Activated T-helper 1 cell treated with anti-CD3 and anti-CD28 coated beads, Interleukin-12 subunit alpha, Interleukin-12 subunit beta, Interleukin-2, Interleukin-4 antibody, amounts not matched to agents 30 ng/mL and 10 ng/mL and 1 ng/mL, durations not matched to agents 14 hours and 24 hours and 36 hours (primary cell): ENCODE measurements at regions of chr5 and their contacts with region 1.

Region 1: DNA sequence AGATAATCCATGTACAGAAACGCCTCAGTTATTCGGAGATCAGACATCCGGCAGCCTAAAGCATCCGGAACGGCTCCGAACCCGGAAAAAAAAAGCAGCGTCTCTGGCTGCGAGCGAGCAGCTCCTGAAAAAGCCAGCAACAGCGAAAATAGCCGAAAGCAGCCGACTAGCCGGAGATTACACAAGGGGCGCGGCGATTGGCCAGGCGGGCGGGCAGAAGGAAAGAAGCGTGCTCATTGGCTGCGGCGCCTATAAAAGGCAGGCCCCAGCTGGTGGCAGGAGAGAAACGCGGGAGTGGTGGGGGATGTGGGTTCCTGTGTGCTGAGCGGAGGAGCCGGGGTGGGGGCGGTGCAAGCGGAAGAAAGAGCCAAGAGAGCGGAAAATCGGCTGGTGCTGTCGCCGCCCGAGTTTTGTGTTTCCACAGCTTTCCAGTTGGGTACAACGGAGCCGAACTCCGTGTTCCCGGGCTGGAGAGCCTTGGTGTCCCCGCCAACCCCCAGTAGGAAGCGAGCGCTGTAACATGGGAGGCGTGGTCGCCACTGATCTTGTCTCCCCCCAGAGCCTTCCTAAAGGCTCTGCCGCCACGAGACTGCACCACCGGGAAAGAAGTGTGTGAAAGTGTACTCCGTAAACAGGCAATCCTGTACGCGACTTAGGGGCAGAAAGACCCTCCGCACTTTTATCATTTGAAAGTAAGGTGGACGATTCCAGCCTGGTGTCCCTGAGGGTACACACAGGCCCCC is at the start of gene ARL15:
- DNase-seq: peak; percentile 97
- H3K4me3 Mint-ChIP-seq: peak within 1 kb of the TSS; percentile 91
- H3K27ac Mint-ChIP-seq: peak within 1 kb of the TSS; percentile 90
- H3K4me1 Mint-ChIP-seq: peaks cover 26% of the 10 kb centered on the region
- H3K27me3 Mint-ChIP-seq: peaks cover 21% of the 10 kb centered on the region
- total RNA-seq, gene ARL15: 7.6 and 10.4 TPM in 2 replicates

Region 2: GRCh38 chr5:53109443-53110127 is 1201.0 kb before region 1 on chr5 and contains the start of gene MOCS2:
- intact Hi-C with region 1: loop called (anchors 5 kb)
- DNase-seq: peak; percentile 86
- H3K4me3 Mint-ChIP-seq: peak within 1 kb of the TSS; percentile 91
- H3K27ac Mint-ChIP-seq: peak within 1 kb of the TSS; percentile 84
- H3K4me1 Mint-ChIP-seq: peaks cover 31% of the 10 kb centered on the region
- H3K27me3 Mint-ChIP-seq: no peaks in the 10 kb centered on the region
- total RNA-seq, gene MOCS2: 17.9 and 18.4 TPM in 2 replicates

Region 3: GRCh38 chr5:54021413-54022164 is 289.0 kb before region 1 on chr5:
- intact Hi-C with region 1: loop called (anchors 5 kb)
- DNase-seq: peak; percentile 31
- H3K4me3 Mint-ChIP-seq: peak overlapping the region; percentile 77
- H3K27ac Mint-ChIP-seq: peak overlapping the region; percentile 67
- H3K4me1 Mint-ChIP-seq: peaks cover 31% of the 10 kb centered on the region
- H3K27me3 Mint-ChIP-seq: no peaks in the 10 kb centered on the region

Region 4: GRCh38 chr5:54492178-54492577 is 181.6 kb after region 1 on chr5:
- intact Hi-C with region 1: loop called (anchors 1 kb)
- DNase-seq: no peak
- H3K4me3 Mint-ChIP-seq: no peak overlapping the region
- H3K27ac Mint-ChIP-seq: no peak overlapping the region
- H3K4me1 Mint-ChIP-seq: no peaks in the 10 kb centered on the region
- H3K27me3 Mint-ChIP-seq: peaks cover 11% of the 10 kb centered on the region

Region 5: GRCh38 chr5:54844905-54845566 is 534.4 kb after region 1 on chr5:
- intact Hi-C with region 1: loop called (anchors 1 kb)
- DNase-seq: no peak
- H3K4me3 Mint-ChIP-seq: no peak overlapping the region
- H3K27ac Mint-ChIP-seq: peak overlapping the region; percentile 59
- H3K4me1 Mint-ChIP-seq: peaks cover 32% of the 10 kb centered on the region
- H3K27me3 Mint-ChIP-seq: peaks cover 14% of the 10 kb centered on the region

Region 6: GRCh38 chr5:55172051-55172899 is 861.7 kb after region 1 on chr5:
- intact Hi-C with region 1: loop called (anchors 5 kb)
- DNase-seq: peak; percentile 61
- H3K4me3 Mint-ChIP-seq: peak overlapping the region; percentile 86
- H3K27ac Mint-ChIP-seq: no peak overlapping the region
- H3K4me1 Mint-ChIP-seq: peaks cover 46% of the 10 kb centered on the region
- H3K27me3 Mint-ChIP-seq: peaks cover 78% of the 10 kb centered on the region